CD8-positive, alpha-beta T cell (primary cell): ENCODE measurements at regions of chr15 and their contacts with region 1.

Region 1: DNA sequence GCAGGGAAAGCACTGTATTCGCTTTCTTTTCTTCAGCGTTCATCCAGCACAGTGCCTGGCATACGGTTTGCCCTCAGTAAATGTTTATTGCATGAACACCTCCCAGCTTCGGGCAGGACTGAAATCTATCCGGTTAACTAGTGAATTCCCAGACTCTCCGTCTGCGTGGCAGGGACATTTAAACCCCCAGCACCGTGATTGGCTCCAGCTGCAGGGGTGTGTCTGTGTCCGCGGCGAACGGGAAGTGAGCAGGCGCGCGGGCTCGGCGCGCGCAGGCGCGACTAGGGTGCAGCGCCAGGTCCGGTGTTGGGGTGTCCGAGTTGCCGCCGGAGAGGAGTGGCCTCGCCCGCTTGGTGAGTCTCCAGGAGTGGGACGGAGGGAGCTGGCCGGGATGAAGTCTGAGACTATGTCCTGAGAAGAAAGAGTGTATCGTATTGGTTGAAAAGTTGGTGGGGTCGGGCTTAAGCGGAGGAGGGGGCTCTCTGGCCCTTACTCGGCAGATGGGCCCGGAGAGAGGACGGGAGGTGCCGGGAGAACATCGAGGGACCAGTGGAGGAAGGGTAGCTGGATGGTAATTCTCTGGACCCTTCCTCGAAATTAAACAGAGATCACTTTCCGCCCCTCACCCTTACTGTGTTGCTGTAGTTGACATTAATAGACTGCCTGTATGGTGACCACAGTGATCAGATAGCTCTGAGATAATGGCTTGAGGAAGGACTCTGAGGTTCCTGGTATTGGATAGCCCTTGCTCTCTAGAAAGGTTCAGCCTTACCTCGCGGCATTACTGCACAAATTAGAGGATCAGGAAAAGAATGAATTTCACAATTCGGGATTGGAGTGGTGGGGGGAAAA is at the start of gene SNAP23:
- DNase-seq: peak; percentile 49 to 91 (median 84)
- ATAC-seq: peak; percentile 90
- H3K4me3 ChIP-seq: peak within 1 kb of the TSS; percentile 82 to 90
- H3K4me3 Mint-ChIP-seq: peak within 1 kb of the TSS; percentile 97
- H3K27ac ChIP-seq: peak within 1 kb of the TSS; percentile 60 to 71
- H3K27ac Mint-ChIP-seq: peak within 1 kb of the TSS; percentile 97
- H3K4me1 ChIP-seq: peaks cover 41% of the 10 kb centered on the region
- H3K4me1 Mint-ChIP-seq: peaks cover 76% of the 10 kb centered on the region
- H3K27me3 ChIP-seq: no peaks in the 10 kb centered on the region
- H3K27me3 Mint-ChIP-seq: no peaks in the 10 kb centered on the region
- CTCF ChIP-seq: no peak
- total RNA-seq, gene SNAP23: 30.9 to 39.9 TPM

Region 2: DNA sequence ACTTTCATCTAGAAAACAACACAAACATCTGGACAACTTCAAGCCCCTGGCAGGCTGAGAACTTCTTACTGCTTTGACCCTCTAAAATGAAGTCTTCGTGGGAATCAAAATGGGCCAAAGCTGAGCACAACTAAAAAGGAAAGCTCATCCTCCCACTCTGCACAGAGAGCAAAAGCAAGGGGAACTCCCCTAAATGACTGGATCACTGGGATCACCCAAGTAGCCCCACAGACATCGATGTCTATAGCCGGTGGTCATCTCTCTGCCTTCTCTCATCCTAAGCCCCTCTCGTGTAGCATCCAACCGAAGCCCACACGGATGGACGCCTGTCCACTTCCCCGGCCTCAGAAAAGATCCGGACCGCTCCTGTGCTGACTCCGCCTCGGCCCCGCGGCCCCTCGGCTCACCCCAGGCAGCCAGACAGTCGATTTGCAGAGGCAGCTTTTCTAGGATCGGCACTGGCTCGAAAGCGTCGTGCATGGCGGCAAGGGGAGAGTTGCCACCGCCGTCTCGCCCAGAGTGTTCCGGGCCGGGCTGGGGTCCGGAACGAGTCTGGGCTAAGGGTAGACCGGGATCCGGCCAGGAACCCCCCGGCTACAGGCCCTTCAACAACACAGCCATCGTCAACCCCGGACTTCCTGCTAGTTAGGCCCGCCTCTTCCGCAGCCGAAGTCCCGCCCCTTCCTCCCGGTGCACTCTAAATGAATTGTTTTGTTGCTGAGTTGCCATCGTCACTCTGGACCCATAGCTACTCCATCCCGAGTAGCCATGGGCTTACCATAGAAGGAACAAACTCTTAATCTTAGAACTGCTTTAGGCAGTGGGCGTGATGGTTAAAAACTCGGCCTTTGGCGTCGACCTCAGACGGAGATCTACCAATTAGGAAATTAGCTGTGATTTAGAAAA is 287.7 kb before region 1 on chr15 and contains the start of gene VPS39:
- CTCF ChIA-PET with region 1: no interaction called
- POLR2A ChIA-PET with region 1: no interaction called
- intact Hi-C with region 1: loop called in 1 of 2 experiments (anchors 5 kb)
- DNase-seq: peak; percentile 65 to 90 (median 85)
- ATAC-seq: peak; percentile 98
- H3K4me3 ChIP-seq: peak within 1 kb of the TSS; percentile 73 to 96
- H3K4me3 Mint-ChIP-seq: peak within 1 kb of the TSS; percentile 97
- H3K27ac ChIP-seq: peak within 1 kb of the TSS; percentile 83 to 84
- H3K27ac Mint-ChIP-seq: peak within 1 kb of the TSS; percentile 95
- H3K4me1 ChIP-seq: peaks cover 23% of the 10 kb centered on the region
- H3K4me1 Mint-ChIP-seq: peaks cover 40% of the 10 kb centered on the region
- H3K27me3 ChIP-seq: no peaks in the 10 kb centered on the region
- H3K27me3 Mint-ChIP-seq: no peaks in the 10 kb centered on the region
- CTCF ChIP-seq: no peak
- total RNA-seq, gene VPS39: 81.5 to 82.9 TPM

Region 3: GRCh38 chr15:42474827-42475226 is 20.8 kb before region 1 on chr15:
- CTCF ChIA-PET with region 1: interaction called, 6 read pairs
- POLR2A ChIA-PET with region 1: interaction called, 3 read pairs
- intact Hi-C with region 1: loop called in 1 of 2 experiments (anchors 2 kb)
- DNase-seq: no peak
- ATAC-seq: no peak
- H3K4me3 ChIP-seq: no peak overlapping the region
- H3K4me3 Mint-ChIP-seq: no peak overlapping the region
- H3K27ac ChIP-seq: no peak overlapping the region
- H3K27ac Mint-ChIP-seq: peak overlapping the region; percentile 37
- H3K4me1 ChIP-seq: no peaks in the 10 kb centered on the region
- H3K4me1 Mint-ChIP-seq: peaks cover 9% of the 10 kb centered on the region
- H3K27me3 ChIP-seq: no peaks in the 10 kb centered on the region
- H3K27me3 Mint-ChIP-seq: no peaks in the 10 kb centered on the region
- CTCF ChIP-seq: no peak

Region 4: DNA sequence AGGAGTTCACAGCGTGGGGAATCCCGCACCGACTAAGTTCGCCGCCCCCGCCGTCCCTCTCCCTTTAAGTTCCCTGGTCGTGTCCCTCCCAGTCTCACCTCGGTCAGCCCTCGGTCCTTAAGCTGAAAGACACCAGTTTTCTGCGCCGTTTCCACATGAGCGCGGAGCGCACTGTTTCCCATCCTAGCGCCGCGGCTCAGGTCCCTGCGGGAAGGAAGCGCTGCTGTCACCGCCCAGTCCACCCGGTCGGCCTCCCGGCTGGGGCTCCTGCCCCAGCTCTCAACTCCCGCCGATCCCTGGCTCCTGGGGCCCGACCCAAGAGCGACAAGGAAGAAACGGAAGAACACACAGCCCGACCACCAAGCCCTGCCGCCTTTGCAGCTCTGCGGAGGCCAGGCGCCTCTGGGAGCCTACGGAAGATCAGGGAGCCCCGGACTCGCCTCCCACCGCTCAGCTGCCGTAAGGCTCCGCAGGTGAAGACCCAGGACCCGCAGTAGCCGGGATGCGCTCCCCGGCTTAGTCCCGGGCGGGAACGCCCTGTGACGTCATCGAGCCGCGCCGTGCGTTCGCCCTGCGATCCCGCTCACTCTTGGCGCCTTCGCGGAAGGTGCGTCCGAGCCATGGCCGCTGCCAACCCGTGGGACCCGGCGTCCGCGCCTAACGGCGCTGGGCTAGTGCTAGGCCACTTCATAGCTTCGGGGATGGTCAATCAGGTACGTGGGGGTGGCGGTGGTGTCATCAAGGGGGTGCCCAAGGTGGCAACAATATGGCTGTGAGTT is 52.9 kb after region 1 on chr15 and contains the starts of genes HAUS2 and LRRC57:
- CTCF ChIA-PET with region 1: interaction called, 3 read pairs
- POLR2A ChIA-PET with region 1: interaction called, 10 read pairs
- intact Hi-C with region 1: loop called (anchors 1 kb)
- DNase-seq: peak; percentile 70 to 93 (median 89)
- ATAC-seq: peak; percentile 86
- H3K4me3 ChIP-seq: peak within 1 kb of the TSS; percentile 78 to 90
- H3K4me3 Mint-ChIP-seq: peak within 1 kb of the TSS; percentile 95
- H3K27ac ChIP-seq: peak within 1 kb of the TSS; percentile 82 to 95
- H3K27ac Mint-ChIP-seq: peak within 1 kb of the TSS; percentile 97
- H3K4me1 ChIP-seq: peaks cover 27% of the 10 kb centered on the region
- H3K4me1 Mint-ChIP-seq: peaks cover 46% of the 10 kb centered on the region
- H3K27me3 ChIP-seq: no peaks in the 10 kb centered on the region
- H3K27me3 Mint-ChIP-seq: no peaks in the 10 kb centered on the region
- CTCF ChIP-seq: no peak
- total RNA-seq, gene HAUS2: 33.1 to 39.1 TPM
- total RNA-seq, gene LRRC57: 30.0 to 31.1 TPM

Region 5: DNA sequence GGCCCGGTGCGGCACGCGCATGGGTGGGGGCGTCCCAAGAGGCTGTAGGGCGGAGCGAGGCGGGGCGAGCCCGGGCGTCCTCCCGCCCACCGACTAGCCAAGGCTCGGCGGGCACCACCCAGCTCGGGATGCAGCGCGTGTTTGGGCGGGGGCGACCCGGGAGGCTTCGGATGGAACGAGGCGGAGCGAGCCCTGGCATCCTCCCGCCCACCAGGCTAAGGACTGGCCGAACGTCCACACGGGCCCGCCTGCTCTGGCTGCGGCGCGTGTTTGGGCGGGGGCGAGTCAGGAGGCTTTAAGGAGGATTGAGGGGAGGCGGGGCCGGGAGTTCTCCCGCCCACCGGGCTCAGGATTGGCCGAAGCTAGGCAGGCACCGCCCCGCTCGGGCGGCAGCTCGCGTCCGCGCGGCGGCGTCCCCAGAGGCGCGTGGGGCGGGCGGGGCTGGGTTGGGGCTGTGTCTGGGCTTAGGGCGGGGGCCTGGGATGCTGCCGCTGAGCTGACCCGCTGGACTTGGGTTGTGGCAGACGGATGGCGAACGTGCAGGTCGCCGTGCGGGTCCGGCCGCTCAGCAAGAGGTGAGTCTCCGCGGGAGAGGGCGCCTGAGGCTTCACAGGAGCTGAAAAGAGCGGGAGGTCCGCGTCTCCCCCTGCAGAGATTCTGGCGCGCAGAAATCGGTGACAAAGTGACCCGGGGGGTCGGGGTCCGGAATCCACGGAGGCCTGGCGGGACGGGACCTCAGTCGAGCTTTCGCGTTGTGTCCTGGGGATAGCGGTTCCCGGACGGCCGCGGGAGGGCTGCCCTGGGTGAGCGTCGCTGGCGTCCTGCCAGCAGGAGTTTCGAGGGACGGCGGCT is 79.8 kb after region 1 on chr15 and contains the start of gene STARD9:
- CTCF ChIA-PET with region 1: no interaction called
- POLR2A ChIA-PET with region 1: interaction called, 7 read pairs
- intact Hi-C with region 1: loop called (anchors 1 kb)
- DNase-seq: peak; percentile 89 to 97 (median 93)
- ATAC-seq: peak; percentile 91
- H3K4me3 ChIP-seq: peak within 1 kb of the TSS; percentile 87 to 89
- H3K4me3 Mint-ChIP-seq: peak within 1 kb of the TSS; percentile 93
- H3K27ac ChIP-seq: peak within 1 kb of the TSS; percentile 41 to 57
- H3K27ac Mint-ChIP-seq: peak within 1 kb of the TSS; percentile 74
- H3K4me1 ChIP-seq: peaks cover 16% of the 10 kb centered on the region
- H3K4me1 Mint-ChIP-seq: peaks cover 27% of the 10 kb centered on the region
- H3K27me3 ChIP-seq: no peaks in the 10 kb centered on the region
- H3K27me3 Mint-ChIP-seq: no peaks in the 10 kb centered on the region
- CTCF ChIP-seq: no peak
- total RNA-seq, gene STARD9: 8.5 to 9.0 TPM

Region 6: GRCh38 chr15:42736793-42737528 is 241.4 kb after region 1 on chr15 and contains the start of gene CDAN1:
- CTCF ChIA-PET with region 1: no interaction called
- POLR2A ChIA-PET with region 1: no interaction called
- intact Hi-C with region 1: loop called (anchors 2 to 10 kb)
- DNase-seq: peak; percentile 88 to 97 (median 93)
- ATAC-seq: peak; percentile 93
- H3K4me3 ChIP-seq: peak within 1 kb of the TSS; percentile 62 to 78
- H3K4me3 Mint-ChIP-seq: peak within 1 kb of the TSS; percentile 80
- H3K27ac ChIP-seq: peak within 1 kb of the TSS; percentile 72 to 80
- H3K27ac Mint-ChIP-seq: peak within 1 kb of the TSS; percentile 78
- H3K4me1 ChIP-seq: peaks cover 14% of the 10 kb centered on the region
- H3K4me1 Mint-ChIP-seq: peaks cover 22% of the 10 kb centered on the region
- H3K27me3 ChIP-seq: no peaks in the 10 kb centered on the region
- H3K27me3 Mint-ChIP-seq: no peaks in the 10 kb centered on the region
- CTCF ChIP-seq: no peak
- total RNA-seq, gene CDAN1: 23.9 to 24.0 TPM

Region 7: DNA sequence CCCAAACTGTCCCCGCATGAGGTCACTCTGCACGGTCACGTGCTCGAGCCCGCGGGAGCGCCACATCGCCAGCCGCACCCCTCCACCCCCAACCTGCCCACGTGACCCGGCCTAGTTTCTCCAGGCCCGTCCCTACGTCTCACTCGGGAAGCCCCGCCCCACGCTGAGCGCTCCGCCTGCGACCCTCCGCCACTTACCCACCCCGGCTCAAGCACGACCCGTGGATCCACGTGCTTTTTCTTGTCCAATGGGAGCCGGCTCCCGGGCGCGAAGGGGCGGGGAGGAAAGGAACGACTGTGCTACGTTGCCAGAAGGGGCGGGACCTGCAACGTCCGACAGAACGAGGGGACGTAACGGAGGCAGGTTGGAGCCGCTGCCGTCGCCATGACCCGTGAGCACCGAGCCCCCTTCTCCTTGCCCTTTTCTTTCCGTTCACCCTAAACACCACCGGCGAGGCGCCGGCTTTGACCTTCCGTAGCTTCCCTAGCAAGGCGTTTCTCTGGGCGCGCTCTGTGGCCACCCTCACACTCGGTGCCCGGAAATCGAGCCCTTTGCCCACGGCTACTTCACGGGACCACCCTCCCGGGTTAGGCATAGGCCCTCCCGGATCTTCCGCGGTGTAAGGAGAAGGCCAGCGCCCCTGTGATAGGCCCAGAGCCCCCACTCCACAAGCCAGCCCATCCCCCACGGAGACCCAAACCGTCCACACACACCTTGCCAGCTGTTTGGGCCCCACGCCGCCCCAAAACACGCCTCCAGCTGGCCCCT is 1296.6 kb after region 1 on chr15 and contains the start of gene SERF2:
- CTCF ChIA-PET with region 1: no interaction called
- POLR2A ChIA-PET with region 1: no interaction called
- intact Hi-C with region 1: loop called in 1 of 2 experiments (anchors 5 kb)
- DNase-seq: peak; percentile 99 to 100 (median 99)
- ATAC-seq: peak; percentile 95
- H3K4me3 ChIP-seq: peak within 1 kb of the TSS; percentile 90 to 98
- H3K4me3 Mint-ChIP-seq: peak within 1 kb of the TSS; percentile 96
- H3K27ac ChIP-seq: peak within 1 kb of the TSS; percentile 98
- H3K27ac Mint-ChIP-seq: peak within 1 kb of the TSS; percentile 97
- H3K4me1 ChIP-seq: peaks cover 38% of the 10 kb centered on the region
- H3K4me1 Mint-ChIP-seq: peaks cover 42% of the 10 kb centered on the region
- H3K27me3 ChIP-seq: no peaks in the 10 kb centered on the region
- H3K27me3 Mint-ChIP-seq: no peaks in the 10 kb centered on the region
- CTCF ChIP-seq: no peak
- total RNA-seq, gene SERF2: 322 TPM